ENCODE measurements at regions of chr13 and their contacts with region 1.

Region 1: GRCh38 chr13:52809310-52809769 is 39.1 kb downstream of the PCDH8 start:
- DNase-seq: peak; percentile 35
- ATAC-seq: peak; percentile 89
- H3K4me3 ChIP-seq: no peak overlapping the region
- H3K27ac ChIP-seq: no peak overlapping the region
- H3K4me1 ChIP-seq: peaks cover 4% of the 10 kb centered on the region; the same call in 1 of the 2 replicates
- H3K27me3 ChIP-seq: no peaks in the 10 kb centered on the region
- CTCF ChIP-seq: peak; percentile 75 to 86 (median 86)
- EP300 ChIP-seq: no peak
- POLR2A ChIP-seq: no peak
- RAD21 ChIP-seq: peak; percentile 86

Region 2: DNA sequence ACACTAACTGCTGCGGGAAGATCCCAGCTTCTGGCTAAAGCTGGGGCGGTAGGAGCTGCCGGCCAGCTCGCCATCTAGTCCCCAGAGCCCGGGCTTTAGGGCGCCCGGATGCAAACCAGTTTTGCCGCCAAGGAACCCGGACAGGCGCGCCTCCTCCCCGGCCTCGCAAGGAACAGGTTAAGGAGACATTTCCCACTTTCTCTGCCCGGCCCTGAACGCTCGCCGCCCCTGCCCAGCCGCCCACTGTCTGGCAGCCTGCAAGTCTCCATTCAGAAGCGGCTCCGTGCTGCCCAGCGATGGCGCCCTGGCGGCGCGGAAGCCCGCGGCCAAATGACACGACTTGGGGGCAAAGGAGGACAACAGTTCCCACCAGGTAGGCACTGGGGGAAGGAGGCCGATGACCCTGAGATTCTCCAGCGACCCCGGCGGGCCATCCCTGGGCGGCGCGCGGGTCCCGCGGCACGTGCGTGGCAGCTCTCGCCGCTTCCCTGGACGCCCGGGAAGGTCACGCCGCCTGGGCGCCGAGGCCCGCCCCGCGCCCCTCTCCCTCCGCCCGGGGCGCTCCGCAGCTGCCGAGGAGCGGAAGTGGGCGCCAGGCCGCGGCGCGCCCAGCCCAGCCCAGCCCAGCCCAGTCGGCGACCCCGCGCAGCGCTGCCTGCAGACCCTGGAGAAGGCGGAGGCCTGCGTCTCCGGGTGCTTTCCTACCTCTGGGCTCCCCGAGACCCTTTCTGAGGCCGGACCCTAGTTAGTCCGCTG is 209.3 kb before region 1 on chr13:
- CTCF ChIA-PET with region 1: no interaction called
- POLR2A ChIA-PET with region 1: no interaction called
- RAD21 ChIA-PET with region 1: no interaction called
- SMC1A ChIA-PET with region 1: no interaction called
- in situ Hi-C with region 1: loop called (anchors 10 kb)
- intact Hi-C with region 1: no loop called
- DNase-seq: no peak
- ATAC-seq: peak; percentile 74
- H3K4me3 ChIP-seq: peak overlapping the region; percentile 50
- H3K27ac ChIP-seq: no peak overlapping the region
- H3K4me1 ChIP-seq: no peaks in the 10 kb centered on the region
- H3K27me3 ChIP-seq: peaks cover 0 to 1% of the 10 kb centered on the region in 2 experiments; a peak in 1 of 4 replicates
- CTCF ChIP-seq: no peak
- EP300 ChIP-seq: no peak
- POLR2A ChIP-seq: no peak
- RAD21 ChIP-seq: no peak

Region 3: GRCh38 chr13:52659340-52659739 is 150.0 kb before region 1 on chr13:
- CTCF ChIA-PET with region 1: interaction called, 179 read pairs
- POLR2A ChIA-PET with region 1: no interaction called
- RAD21 ChIA-PET with region 1: interaction called, 147 read pairs
- SMC1A ChIA-PET with region 1: interaction called, 129 read pairs
- in situ Hi-C with region 1: no loop called
- intact Hi-C with region 1: no loop called
- DNase-seq: no peak
- ATAC-seq: no peak
- H3K4me3 ChIP-seq: no peak overlapping the region
- H3K27ac ChIP-seq: no peak overlapping the region
- H3K4me1 ChIP-seq: peaks cover 5% of the 10 kb centered on the region; the same call in 1 of the 2 replicates
- H3K27me3 ChIP-seq: no peaks in the 10 kb centered on the region
- CTCF ChIP-seq: no peak
- EP300 ChIP-seq: no peak
- POLR2A ChIP-seq: no peak
- RAD21 ChIP-seq: no peak

Region 4: DNA sequence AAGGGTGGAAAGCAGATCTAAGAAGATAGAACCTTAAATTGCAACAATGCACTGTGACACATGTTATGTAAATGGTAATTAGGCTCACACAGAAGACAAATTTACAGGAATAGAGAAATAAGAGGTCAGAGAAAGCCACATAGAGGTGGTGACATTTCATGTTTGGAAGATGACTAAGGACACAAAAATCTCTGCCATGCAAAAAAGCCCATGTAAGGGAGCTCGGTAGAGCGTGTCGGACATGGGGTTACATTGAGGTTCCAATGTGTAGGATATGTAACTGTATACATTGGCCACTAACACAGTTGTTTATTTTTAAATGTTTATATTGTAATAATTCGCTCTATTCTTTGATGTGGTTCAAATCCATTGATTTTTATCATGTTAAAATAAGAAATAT is 123.0 kb before region 1 on chr13:
- CTCF ChIA-PET with region 1: interaction called, 27 read pairs
- POLR2A ChIA-PET with region 1: no interaction called
- RAD21 ChIA-PET with region 1: interaction called, 34 read pairs
- SMC1A ChIA-PET with region 1: interaction called, 42 read pairs
- in situ Hi-C with region 1: no loop called
- intact Hi-C with region 1: no loop called
- DNase-seq: no peak
- ATAC-seq: no peak
- H3K4me3 ChIP-seq: no peak overlapping the region
- H3K27ac ChIP-seq: no peak overlapping the region
- H3K4me1 ChIP-seq: no peaks in the 10 kb centered on the region
- H3K27me3 ChIP-seq: no peaks in the 10 kb centered on the region
- CTCF ChIP-seq: no peak
- EP300 ChIP-seq: no peak
- POLR2A ChIP-seq: no peak
- RAD21 ChIP-seq: no peak

Region 5: DNA sequence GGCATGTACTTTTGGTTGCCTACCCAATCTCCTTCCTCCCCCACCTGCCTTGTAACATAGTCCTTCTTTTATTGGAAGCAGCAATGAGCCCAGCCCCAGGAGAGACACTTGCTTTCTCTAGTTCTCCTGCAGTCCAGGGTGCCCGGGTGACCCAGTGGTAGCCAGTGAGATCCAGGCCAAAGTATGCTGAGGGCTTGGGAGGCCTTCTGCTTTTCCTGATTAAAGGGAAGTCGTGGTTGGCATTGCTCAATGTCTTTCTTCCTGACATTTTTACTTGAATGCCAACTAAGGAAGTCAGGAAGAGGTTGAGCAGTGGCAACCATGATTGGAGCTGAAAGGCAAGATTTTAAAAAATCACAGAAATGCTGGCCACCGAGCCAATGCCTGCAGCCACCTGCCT is 95.4 kb before region 1 on chr13:
- CTCF ChIA-PET with region 1: interaction called, 4 read pairs
- POLR2A ChIA-PET with region 1: no interaction called
- RAD21 ChIA-PET with region 1: no interaction called
- SMC1A ChIA-PET with region 1: interaction called, 25 read pairs
- in situ Hi-C with region 1: no loop called
- intact Hi-C with region 1: no loop called
- DNase-seq: no peak
- ATAC-seq: no peak
- H3K4me3 ChIP-seq: no peak overlapping the region
- H3K27ac ChIP-seq: no peak overlapping the region
- H3K4me1 ChIP-seq: no peaks in the 10 kb centered on the region
- H3K27me3 ChIP-seq: no peaks in the 10 kb centered on the region
- CTCF ChIP-seq: no peak
- EP300 ChIP-seq: no peak
- POLR2A ChIP-seq: no peak
- RAD21 ChIP-seq: no peak

Region 6: DNA sequence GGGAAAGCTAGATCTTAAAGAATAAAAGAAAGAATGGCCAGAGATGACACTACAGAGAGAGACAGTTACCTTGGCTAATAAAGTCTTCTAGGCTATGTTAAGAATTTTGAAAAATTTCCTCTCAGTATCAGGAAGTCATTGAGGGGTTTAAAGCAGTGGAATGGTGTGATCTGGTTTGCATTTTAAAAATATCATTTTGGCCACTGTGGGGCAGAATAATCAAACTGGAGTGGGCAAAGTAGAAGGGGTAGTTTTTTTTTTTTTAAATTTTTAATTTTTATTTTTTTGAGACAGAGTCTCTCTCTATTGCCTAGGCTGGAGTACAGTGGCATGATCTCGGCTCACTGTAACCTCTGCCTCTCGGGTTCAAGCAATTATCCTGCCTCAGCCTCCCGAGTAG is 65.4 kb before region 1 on chr13:
- CTCF ChIA-PET with region 1: interaction called, 78 read pairs
- POLR2A ChIA-PET with region 1: no interaction called
- RAD21 ChIA-PET with region 1: interaction called, 17 read pairs
- SMC1A ChIA-PET with region 1: interaction called, 134 read pairs
- in situ Hi-C with region 1: no loop called
- intact Hi-C with region 1: loop called (anchors 5 kb)
- DNase-seq: no peak
- ATAC-seq: peak; percentile 46
- H3K4me3 ChIP-seq: no peak overlapping the region
- H3K27ac ChIP-seq: no peak overlapping the region
- H3K4me1 ChIP-seq: no peaks in the 10 kb centered on the region; the same call in 1 of the 2 replicates
- H3K27me3 ChIP-seq: peaks cover 2 to 9% of the 10 kb centered on the region in 2 experiments; a peak in 3 of 4 replicates
- CTCF ChIP-seq: no peak
- EP300 ChIP-seq: no peak
- POLR2A ChIP-seq: no peak
- RAD21 ChIP-seq: peak; percentile 43; the same call in 1 of the 2 replicates

Region 7: DNA sequence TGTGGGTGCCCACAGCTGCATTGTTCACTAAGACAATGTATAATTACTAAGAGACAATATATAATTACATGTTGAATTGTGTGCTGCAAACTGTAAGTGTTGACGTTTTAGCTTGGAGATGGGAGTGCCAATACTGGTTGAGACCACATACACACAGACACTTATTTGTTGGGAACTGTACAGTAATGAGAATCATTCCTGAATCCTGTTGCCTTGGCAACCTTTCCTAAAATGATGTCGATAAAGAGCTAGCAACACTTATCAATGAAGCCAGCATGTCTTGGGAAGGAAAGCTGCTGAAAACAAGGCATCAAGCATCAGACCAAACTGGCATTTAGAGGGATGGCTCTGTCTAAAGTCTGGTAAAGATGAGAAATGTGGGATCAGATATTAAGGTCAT is 12.2 kb before region 1 on chr13:
- CTCF ChIA-PET with region 1: interaction called, 30 read pairs
- POLR2A ChIA-PET with region 1: interaction called, 3 read pairs
- RAD21 ChIA-PET with region 1: interaction called, 8 read pairs
- SMC1A ChIA-PET with region 1: interaction called, 11 read pairs
- in situ Hi-C with region 1: no loop called
- intact Hi-C with region 1: no loop called
- DNase-seq: no peak
- ATAC-seq: no peak
- H3K4me3 ChIP-seq: no peak overlapping the region
- H3K27ac ChIP-seq: no peak overlapping the region
- H3K4me1 ChIP-seq: no peaks in the 10 kb centered on the region
- H3K27me3 ChIP-seq: peaks cover 0 to 2% of the 10 kb centered on the region in 2 experiments; a peak in 1 of 4 replicates
- CTCF ChIP-seq: no peak
- EP300 ChIP-seq: no peak
- POLR2A ChIP-seq: no peak
- RAD21 ChIP-seq: no peak